ENCODE measurements at regions of chr20 and their contacts with region 1.

Region 1: GRCh38 chr20:17129089-17129488 is 97.8 kb upstream of the PCSK2 start:
- DNase-seq: no peak
- H3K4me3 ChIP-seq: no peak overlapping the region
- H3K27ac ChIP-seq: no peak overlapping the region
- H3K4me1 ChIP-seq: no peaks in the 10 kb centered on the region
- H3K27me3 ChIP-seq: no peaks in the 10 kb centered on the region
- CTCF ChIP-seq: no peak
- EP300 ChIP-seq: no peak
- POLR2A ChIP-seq: no peak

Region 2: DNA sequence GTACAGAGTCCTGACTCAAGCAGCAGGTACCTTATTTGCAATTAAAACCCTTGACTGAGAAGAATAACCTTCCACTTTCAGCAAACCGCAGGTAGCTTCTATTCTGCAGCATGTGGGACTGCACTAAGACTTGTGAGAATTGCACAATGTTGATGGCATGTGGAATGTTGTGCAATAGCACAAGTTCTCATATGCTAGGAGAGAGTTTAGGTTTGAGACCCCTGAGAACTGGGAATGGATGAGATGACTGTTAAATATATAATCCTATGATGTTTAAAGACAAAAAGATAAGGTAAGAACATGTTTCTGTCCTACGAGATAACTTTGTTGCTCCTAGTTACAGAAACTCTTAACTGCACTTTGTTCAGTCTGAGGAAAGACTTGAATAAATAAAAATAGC is 186.3 kb before region 1 on chr20:
- in situ Hi-C with region 1: no loop called
- intact Hi-C with region 1: no loop called
- DNase-seq: no peak
- H3K4me3 ChIP-seq: no peak overlapping the region
- H3K27ac ChIP-seq: no peak overlapping the region
- H3K4me1 ChIP-seq: no peaks in the 10 kb centered on the region
- H3K27me3 ChIP-seq: no peaks in the 10 kb centered on the region
- CTCF ChIP-seq: no peak
- EP300 ChIP-seq: no peak
- POLR2A ChIP-seq: no peak

Region 3: DNA sequence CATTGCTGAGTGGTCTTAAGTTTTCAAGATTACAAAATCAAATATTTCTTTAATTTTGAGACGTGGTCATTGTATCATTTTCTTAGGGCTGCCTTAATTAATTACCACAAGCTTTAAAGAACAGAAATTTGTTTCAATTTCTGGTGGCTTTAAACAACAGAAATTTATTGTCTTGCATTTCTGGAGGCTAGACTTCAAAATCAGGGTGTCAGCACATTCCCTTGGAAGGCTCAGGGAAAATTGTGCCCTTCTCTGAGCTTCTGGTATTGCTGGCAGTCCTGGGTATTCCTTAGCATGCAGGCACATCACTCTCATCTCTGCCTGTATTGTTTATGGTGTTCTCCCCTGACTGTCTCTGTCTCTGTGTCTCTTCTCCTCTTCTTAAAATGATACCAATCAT is 21.8 kb after region 1 on chr20:
- in situ Hi-C with region 1: no loop called
- intact Hi-C with region 1: loop called (anchors 1 kb)
- DNase-seq: no peak
- H3K4me3 ChIP-seq: no peak overlapping the region
- H3K27ac ChIP-seq: no peak overlapping the region
- H3K4me1 ChIP-seq: no peaks in the 10 kb centered on the region
- H3K27me3 ChIP-seq: no peaks in the 10 kb centered on the region
- CTCF ChIP-seq: no peak
- EP300 ChIP-seq: no peak
- POLR2A ChIP-seq: no peak

Region 4: DNA sequence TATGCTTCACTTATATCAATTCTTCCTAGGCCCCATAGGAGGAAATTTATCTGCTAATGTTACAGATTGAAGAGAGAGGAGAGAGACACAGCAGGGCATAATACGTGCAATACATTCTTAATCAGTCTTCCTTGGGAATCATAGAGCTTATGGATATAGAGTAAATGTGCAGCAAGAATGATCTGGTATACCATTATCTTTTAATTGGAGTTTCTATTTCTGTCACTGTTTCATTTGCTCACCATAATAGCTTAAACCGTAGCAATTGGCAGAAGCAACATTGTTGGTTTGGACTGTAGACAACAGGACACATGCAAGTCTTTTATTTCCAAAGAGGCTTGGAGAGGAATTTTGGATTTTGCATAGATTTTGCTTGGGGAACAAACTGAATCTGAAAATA is 29.6 kb after region 1 on chr20:
- in situ Hi-C with region 1: no loop called
- intact Hi-C with region 1: loop called (anchors 1 kb)
- DNase-seq: no peak
- H3K4me3 ChIP-seq: no peak overlapping the region
- H3K27ac ChIP-seq: no peak overlapping the region
- H3K4me1 ChIP-seq: no peaks in the 10 kb centered on the region
- H3K27me3 ChIP-seq: no peaks in the 10 kb centered on the region
- CTCF ChIP-seq: no peak
- EP300 ChIP-seq: no peak
- POLR2A ChIP-seq: no peak